T-cell (primary cell): ENCODE measurements at regions of chr20 and their contacts with region 1.

Region 1: GRCh38 chr20:45934586-45935415 is at the start of gene PCIF1:
- DNase-seq: peak; percentile 94 to 100 (median 97)
- ATAC-seq: peak; percentile 81 to 83 (median 82)
- H3K4me3 ChIP-seq: peak within 1 kb of the TSS; percentile 98 to 100
- H3K4me3 Mint-ChIP-seq: peak within 1 kb of the TSS; percentile 93 to 97 (median 97)
- H3K27ac ChIP-seq: peak within 1 kb of the TSS; percentile 99
- H3K27ac Mint-ChIP-seq: peak within 1 kb of the TSS; percentile 95 to 98
- H3K4me1 ChIP-seq: peaks cover 5 to 32% of the 10 kb centered on the region in 2 experiments
- H3K4me1 Mint-ChIP-seq: peaks cover 21 to 42% (median 31%) of the 10 kb centered on the region in 3 donors
- H3K27me3 ChIP-seq: no peaks in the 10 kb centered on the region
- H3K27me3 Mint-ChIP-seq: no peaks in the 10 kb centered on the region
- total RNA-seq, gene PCIF1: 74.4 to 78.7 (median 74.6) TPM

Region 2: DNA sequence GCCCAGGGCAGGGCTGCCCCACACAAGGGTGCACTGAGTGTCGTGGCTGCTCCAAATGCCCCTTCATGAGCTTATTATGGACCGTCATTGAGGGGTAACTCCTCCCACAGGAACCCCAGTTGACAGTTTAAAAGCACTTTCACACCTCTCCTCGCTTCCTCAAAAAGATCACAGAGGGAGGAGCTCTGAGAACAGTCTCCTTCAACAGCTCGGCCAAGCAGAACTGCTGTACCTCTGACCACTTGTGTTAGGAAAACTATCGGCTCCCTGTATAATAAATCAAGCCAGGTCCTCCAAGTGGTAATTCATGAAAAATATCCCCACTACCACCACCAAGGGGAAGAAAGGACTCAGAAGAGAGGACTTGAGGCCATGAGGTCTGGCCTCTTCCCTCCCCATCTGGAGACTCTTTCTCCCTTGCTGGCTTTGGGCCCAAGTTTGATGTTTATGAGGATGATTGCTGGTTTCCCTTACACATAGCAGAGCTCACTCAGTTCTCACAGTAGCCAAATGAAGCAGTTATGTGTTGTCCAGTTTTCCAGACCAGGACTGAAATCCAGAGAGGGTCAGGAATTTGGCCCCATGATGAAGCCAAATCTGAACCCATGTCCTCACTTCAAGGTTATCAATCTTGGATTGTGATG is 92.5 kb before region 1 on chr20:
- CTCF ChIA-PET with region 1: interaction called in 1 of 2 experiments, 3 read pairs
- POLR2A ChIA-PET with region 1: interaction called in 1 of 2 experiments, 11 read pairs
- DNase-seq: no peak
- ATAC-seq: no peak
- H3K4me3 ChIP-seq: no peak overlapping the region
- H3K4me3 Mint-ChIP-seq: no peak overlapping the region
- H3K27ac ChIP-seq: no peak overlapping the region
- H3K27ac Mint-ChIP-seq: peak overlapping the region in 1 of 2 donors; percentile 55
- H3K4me1 ChIP-seq: no peaks in the 10 kb centered on the region
- H3K4me1 Mint-ChIP-seq: peaks cover 0 to 3% (median 0%) of the 10 kb centered on the region in 3 donors
- H3K27me3 ChIP-seq: no peaks in the 10 kb centered on the region
- H3K27me3 Mint-ChIP-seq: no peaks in the 10 kb centered on the region

Region 3: DNA sequence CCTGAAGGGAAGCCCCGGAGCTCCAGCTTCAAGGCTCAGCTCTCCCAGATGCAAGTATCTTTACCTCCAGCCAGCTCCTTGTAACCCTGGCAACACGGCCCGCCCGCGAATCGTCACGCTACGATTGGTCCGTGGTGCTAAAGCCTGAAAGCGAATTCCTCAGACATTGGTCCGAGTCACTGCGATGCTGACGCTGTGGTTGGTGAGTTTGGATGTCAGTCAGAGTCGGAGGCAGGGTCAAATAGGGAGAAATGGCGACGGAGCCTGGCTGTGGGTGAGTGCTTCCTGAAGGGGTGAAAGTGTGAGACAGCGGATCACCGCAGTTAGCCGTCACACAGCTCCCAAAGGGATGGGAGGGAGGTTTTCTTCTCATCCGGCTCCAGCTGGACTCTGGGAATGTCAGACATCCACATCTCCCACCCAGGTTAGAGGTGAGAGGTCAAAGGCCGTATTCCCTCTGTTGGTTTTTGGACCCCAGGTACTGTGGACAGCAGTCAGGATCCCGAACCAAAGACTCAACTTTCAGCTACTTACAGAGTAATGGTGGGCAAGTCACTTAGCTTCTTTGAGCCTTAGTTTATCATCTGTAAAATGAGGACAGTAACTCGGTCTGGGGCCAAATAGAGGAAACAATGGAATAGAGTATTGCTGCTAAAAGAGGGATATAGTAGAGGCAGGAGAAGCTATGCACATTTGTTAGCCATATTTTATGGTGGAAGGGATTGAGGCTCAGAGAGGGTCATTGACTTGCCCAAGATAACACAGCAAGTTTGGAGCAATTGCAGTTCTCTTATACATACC is 53.6 kb before region 1 on chr20 and contains the start of gene ZSWIM1:
- CTCF ChIA-PET with region 1: interaction called in 1 of 2 experiments, 4 read pairs
- POLR2A ChIA-PET with region 1: interaction called, 7 to 25 read pairs
- DNase-seq: peak; percentile 95 to 100 (median 98)
- ATAC-seq: peak; percentile 96 to 99 (median 96)
- H3K4me3 ChIP-seq: peak within 1 kb of the TSS; percentile 66 to 85
- H3K4me3 Mint-ChIP-seq: peak within 1 kb of the TSS; percentile 81 to 90 (median 88)
- H3K27ac ChIP-seq: peak within 1 kb of the TSS; percentile 71
- H3K27ac Mint-ChIP-seq: peak within 1 kb of the TSS; percentile 89 to 95
- H3K4me1 ChIP-seq: peaks cover 5 to 32% of the 10 kb centered on the region in 2 experiments
- H3K4me1 Mint-ChIP-seq: peaks cover 43 to 44% (median 43%) of the 10 kb centered on the region in 3 donors
- H3K27me3 ChIP-seq: no peaks in the 10 kb centered on the region
- H3K27me3 Mint-ChIP-seq: no peaks in the 10 kb centered on the region
- total RNA-seq, gene ZSWIM1: 8.3 to 17.2 (median 14.6) TPM

Region 4: DNA sequence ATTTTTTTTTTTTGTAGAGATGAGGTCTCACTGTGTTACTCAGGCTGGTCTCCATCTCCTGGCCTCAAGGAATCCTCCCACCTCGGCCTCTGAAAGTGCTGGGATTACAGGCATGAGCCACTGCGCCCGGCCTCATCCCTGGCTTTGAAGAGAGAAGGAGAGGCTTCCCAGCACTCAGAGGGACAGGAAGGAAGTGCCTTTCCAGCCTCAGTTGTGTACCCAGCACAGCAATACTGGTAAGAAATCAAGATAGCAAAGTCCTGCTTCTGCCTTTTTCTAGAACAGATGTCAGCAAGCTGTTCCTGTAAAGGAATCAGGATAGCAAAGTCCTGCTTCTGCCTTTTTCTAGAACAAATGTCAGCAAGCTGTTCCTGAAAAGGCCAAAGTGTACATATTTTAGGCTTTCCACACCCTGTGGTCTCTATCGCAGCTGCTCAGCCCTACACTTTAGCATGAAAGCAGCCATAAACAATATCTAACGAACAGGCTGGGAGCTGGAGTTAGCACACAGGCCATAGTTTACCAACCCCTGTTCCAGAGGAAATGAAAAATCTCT is 16.5 kb before region 1 on chr20:
- CTCF ChIA-PET with region 1: no interaction called
- POLR2A ChIA-PET with region 1: interaction called in 1 of 2 experiments, 10 read pairs
- DNase-seq: no peak
- ATAC-seq: no peak
- H3K4me3 ChIP-seq: no peak overlapping the region
- H3K4me3 Mint-ChIP-seq: no peak overlapping the region
- H3K27ac ChIP-seq: no peak overlapping the region
- H3K27ac Mint-ChIP-seq: no peak overlapping the region
- H3K4me1 ChIP-seq: no peaks in the 10 kb centered on the region
- H3K4me1 Mint-ChIP-seq: no peaks in the 10 kb centered on the region
- H3K27me3 ChIP-seq: peaks cover 0 to 63% of the 10 kb centered on the region in 2 experiments
- H3K27me3 Mint-ChIP-seq: peaks cover 31 to 46% of the 10 kb centered on the region in 2 donors

Region 5: DNA sequence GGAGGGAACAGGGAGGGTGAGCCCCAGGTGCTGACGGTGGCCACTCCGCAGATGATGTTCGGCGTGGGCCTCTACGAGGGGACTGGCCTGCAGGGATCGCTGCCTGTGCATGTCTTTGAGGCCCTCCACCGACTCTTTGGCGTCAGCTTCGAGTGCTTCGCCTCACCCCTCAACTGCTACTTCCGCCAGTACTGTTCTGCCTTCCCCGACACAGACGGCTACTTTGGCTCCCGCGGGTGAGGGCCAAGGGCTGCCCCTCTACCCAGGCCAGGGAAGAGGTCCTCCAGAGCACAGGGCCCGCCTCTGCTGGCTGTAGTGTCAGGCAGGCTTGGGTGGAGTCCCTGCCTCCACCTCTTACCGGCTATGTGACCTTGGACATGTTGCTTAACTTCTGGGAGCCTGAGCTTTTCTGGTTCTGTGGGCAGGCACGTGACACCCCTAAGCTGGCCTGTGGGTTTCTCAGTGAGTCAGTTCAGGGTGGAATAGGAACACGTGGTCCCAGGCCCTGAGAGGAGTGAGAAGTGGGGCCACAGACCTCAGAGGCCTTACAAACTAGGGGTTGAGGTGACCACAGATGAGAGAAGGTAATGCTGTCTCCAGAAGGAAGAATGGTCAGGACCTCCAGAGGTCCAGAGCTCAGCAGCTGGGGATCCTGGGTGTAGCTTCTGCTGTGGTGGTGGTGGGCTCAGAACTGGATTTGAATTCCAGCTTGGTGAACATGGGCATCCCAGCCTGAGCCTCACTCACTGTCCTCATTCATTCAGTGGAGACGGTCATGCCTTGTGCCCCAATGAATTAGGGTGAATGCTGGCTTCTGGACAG is 11.6 kb after region 1 on chr20:
- CTCF ChIA-PET with region 1: no interaction called
- POLR2A ChIA-PET with region 1: interaction called in 1 of 2 experiments, 11 read pairs
- DNase-seq: peak in 19 of 35 experiments; percentile 21 to 66 (median 37)
- ATAC-seq: peak in 3 of 4 experiments; percentile 35 to 65 (median 52)
- H3K4me3 ChIP-seq: no peak overlapping the region
- H3K4me3 Mint-ChIP-seq: no peak overlapping the region
- H3K27ac ChIP-seq: peak overlapping the region; percentile 50
- H3K27ac Mint-ChIP-seq: peak overlapping the region; percentile 62 to 78
- H3K4me1 ChIP-seq: peaks cover 0 to 33% of the 10 kb centered on the region in 2 experiments
- H3K4me1 Mint-ChIP-seq: peaks cover 0 to 25% (median 13%) of the 10 kb centered on the region in 3 donors
- H3K27me3 ChIP-seq: no peaks in the 10 kb centered on the region
- H3K27me3 Mint-ChIP-seq: no peaks in the 10 kb centered on the region

Region 6: DNA sequence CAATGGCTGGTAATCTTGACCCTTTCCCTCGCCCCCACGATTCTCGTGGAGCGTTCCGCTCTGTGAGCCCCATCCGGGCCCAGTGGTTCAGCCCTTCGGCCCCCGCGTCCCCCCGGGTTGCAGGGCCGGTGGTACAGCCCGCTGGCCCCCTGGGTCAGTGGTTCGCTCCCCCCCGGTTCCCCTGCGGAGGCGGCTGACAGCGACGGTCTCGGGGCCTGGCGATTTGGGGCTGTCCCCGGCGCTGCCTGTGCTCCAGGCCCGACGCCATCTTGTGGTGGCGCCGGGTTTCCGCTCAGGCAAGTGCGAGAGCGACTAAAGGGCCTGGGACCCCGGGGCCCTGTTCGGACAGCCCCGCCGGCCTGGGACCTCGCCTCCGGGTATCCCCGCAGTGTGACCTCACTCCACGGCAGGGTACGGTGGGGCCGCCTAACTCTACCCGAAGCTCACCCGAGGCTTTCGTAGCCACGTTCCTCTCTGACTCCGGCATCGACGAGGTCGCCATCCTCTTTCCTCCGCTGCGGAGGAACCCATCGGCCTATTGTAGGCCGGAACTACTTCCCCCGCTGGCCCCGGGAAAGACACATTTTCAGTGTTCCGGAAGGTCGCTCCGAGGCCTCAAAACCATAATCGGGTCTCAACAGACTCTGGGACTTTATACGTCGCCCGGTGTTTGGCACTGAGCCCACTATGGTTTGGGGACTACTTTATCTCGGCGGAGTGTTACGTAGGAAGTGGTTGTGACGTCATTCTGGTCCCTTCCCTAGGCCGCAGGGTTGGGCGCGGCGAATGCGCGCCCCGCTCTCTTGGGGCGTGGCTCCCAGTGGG is 37.1 kb after region 1 on chr20 and contains the start of gene ZNF335:
- CTCF ChIA-PET with region 1: interaction called, 3 to 15 read pairs
- POLR2A ChIA-PET with region 1: interaction called, 11 to 23 read pairs
- DNase-seq: peak; percentile 86 to 97 (median 92)
- ATAC-seq: peak; percentile 84 to 87 (median 86)
- H3K4me3 ChIP-seq: peak within 1 kb of the TSS; percentile 93 to 99
- H3K4me3 Mint-ChIP-seq: peak within 1 kb of the TSS; percentile 81 to 82 (median 81)
- H3K27ac ChIP-seq: peak within 1 kb of the TSS; percentile 99
- H3K27ac Mint-ChIP-seq: peak within 1 kb of the TSS; percentile 100
- H3K4me1 ChIP-seq: peaks cover 13 to 38% of the 10 kb centered on the region in 2 experiments
- H3K4me1 Mint-ChIP-seq: peaks cover 27 to 31% (median 29%) of the 10 kb centered on the region in 3 donors
- H3K27me3 ChIP-seq: no peaks in the 10 kb centered on the region
- H3K27me3 Mint-ChIP-seq: peaks cover 0 to 3% of the 10 kb centered on the region in 2 donors
- total RNA-seq, gene ZNF335: 58.6 to 106 (median 68.3) TPM

Region 7: GRCh38 chr20:46083101-46083500 is 148.3 kb after region 1 on chr20:
- CTCF ChIA-PET with region 1: no interaction called
- POLR2A ChIA-PET with region 1: interaction called, 5 to 15 read pairs
- DNase-seq: no peak
- ATAC-seq: no peak
- H3K4me3 ChIP-seq: no peak overlapping the region
- H3K4me3 Mint-ChIP-seq: no peak overlapping the region
- H3K27ac ChIP-seq: no peak overlapping the region
- H3K27ac Mint-ChIP-seq: no peak overlapping the region
- H3K4me1 ChIP-seq: peaks cover 10 to 32% of the 10 kb centered on the region in 2 experiments
- H3K4me1 Mint-ChIP-seq: peaks cover 64 to 80% (median 76%) of the 10 kb centered on the region in 3 donors
- H3K27me3 ChIP-seq: no peaks in the 10 kb centered on the region
- H3K27me3 Mint-ChIP-seq: no peaks in the 10 kb centered on the region